ENCODE measurements at regions of chr3 and their contacts with region 1.

Region 1: DNA sequence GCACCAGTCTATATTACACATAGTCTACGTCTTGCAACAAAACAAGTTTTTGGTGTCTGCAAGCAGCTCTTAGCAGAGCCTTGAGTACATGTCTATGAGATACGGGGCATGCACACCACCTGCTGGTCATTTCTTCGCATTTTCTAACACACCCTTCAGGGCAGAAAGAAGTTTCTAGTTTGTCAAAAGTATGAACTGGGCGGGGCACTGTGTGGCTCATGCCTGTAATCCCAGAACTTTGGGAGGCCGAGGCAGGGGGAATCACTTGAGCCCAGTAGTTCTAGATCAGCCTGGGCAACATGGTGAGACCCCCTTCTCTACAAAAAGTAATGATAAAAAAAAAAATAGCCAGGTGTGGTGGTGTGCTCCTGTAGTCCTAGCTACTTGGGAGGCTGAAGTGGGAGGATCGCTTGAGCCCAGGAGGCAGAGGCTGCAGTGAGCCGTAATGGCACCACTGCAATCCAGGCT is 64.2 kb upstream of the ARL8B start:
- ATAC-seq: peak; percentile 52 to 88 (median 72)
- H3K4me3 ChIP-seq: no peak overlapping the region
- H3K27ac ChIP-seq: no peak overlapping the region
- H3K4me1 ChIP-seq: peaks cover 0 to 3% of the 10 kb centered on the region in 2 donors

Region 2: DNA sequence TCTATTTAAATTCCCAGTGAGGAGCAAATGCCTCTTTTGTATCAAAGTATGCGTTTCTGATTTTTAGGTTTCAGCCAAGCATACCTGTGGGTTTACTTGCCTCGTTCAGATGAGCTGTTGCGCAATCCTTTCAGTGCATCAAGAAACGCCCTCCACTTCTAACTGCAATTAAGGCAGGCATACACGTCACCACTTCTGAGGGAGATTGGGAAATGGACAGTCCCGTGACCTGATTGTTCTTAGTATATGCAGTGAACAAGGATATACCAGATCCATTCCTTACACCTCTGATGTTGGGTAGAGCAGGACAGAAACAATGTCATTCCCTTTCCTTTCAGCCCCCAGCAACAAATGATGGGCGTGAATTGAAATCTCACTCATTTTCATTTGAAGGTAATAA is 345.7 kb before region 1 on chr3:
- in situ Hi-C with region 1: loop called in 6 of 9 experiments (anchors 10 to 25 kb)
- ATAC-seq: peak in 2 of 8 experiments; percentile 7 to 47
- H3K4me3 ChIP-seq: no peak overlapping the region
- H3K27ac ChIP-seq: no peak overlapping the region
- H3K4me1 ChIP-seq: peaks cover 0 to 2% of the 10 kb centered on the region in 2 donors

Region 3: GRCh38 chr3:4722103-4722502 is 335.8 kb before region 1 on chr3:
- in situ Hi-C with region 1: loop called in 6 of 9 experiments (anchors 10 to 25 kb)
- ATAC-seq: peak; percentile 32 to 90 (median 76)
- H3K4me3 ChIP-seq: no peak overlapping the region
- H3K27ac ChIP-seq: no peak overlapping the region
- H3K4me1 ChIP-seq: peaks cover 0 to 6% of the 10 kb centered on the region in 2 donors

Region 4: GRCh38 chr3:4948395-4948794 is 109.5 kb before region 1 on chr3:
- in situ Hi-C with region 1: no loop called
- ATAC-seq: no peak
- H3K4me3 ChIP-seq: no peak overlapping the region
- H3K27ac ChIP-seq: no peak overlapping the region
- H3K4me1 ChIP-seq: no peaks in the 10 kb centered on the region

Region 5: GRCh38 chr3:5317557-5317956 is 259.7 kb after region 1 on chr3:
- in situ Hi-C with region 1: no loop called
- ATAC-seq: peak in 2 of 8 experiments; percentile 56 to 69
- H3K4me3 ChIP-seq: no peak overlapping the region
- H3K27ac ChIP-seq: no peak overlapping the region
- H3K4me1 ChIP-seq: peaks cover 0 to 2% of the 10 kb centered on the region in 2 donors

Measured in motor neuron (in vitro differentiated cells).